ENCODE measurements at regions of chr7 and their contacts with region 1.

Region 1: DNA sequence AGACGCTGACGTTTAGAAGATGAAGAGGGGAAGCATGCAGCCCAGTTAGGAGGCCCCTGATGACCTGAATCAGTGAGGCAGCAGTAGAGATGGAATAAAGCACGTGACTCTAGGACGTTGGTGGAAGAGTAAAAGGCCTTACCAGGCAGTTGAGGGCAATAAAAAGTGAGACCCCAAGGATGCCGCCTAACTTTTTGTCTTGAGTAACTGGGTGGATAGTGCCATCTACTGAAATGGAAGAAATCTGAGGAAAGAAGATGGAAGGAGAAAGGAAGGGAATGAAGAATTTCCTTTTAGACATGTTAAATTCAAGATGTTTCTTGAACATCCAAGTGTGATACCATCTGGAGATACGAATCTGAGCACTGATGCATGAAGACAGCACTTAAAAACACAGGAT is 220.0 kb upstream of the LRRN3 start:
- DNase-seq: no peak
- ATAC-seq: no peak
- H3K4me3 ChIP-seq: no peak overlapping the region
- H3K4me3 Mint-ChIP-seq: no peak overlapping the region
- H3K27ac ChIP-seq: no peak overlapping the region
- H3K27ac Mint-ChIP-seq: no peak overlapping the region
- H3K4me1 ChIP-seq: no peaks in the 10 kb centered on the region
- H3K4me1 Mint-ChIP-seq: no peaks in the 10 kb centered on the region
- H3K27me3 ChIP-seq: no peaks in the 10 kb centered on the region
- H3K27me3 Mint-ChIP-seq: no peaks in the 10 kb centered on the region
- CTCF ChIP-seq: no peak

Region 2: GRCh38 chr7:110786328-110786965 is 84.5 kb before region 1 on chr7:
- CTCF ChIA-PET with region 1: no interaction called
- POLR2A ChIA-PET with region 1: no interaction called
- intact Hi-C with region 1: no loop called
- DNase-seq: no peak
- ATAC-seq: no peak
- H3K4me3 ChIP-seq: no peak overlapping the region
- H3K4me3 Mint-ChIP-seq: no peak overlapping the region
- H3K27ac ChIP-seq: no peak overlapping the region
- H3K27ac Mint-ChIP-seq: no peak overlapping the region
- H3K4me1 ChIP-seq: no peaks in the 10 kb centered on the region
- H3K4me1 Mint-ChIP-seq: no peaks in the 10 kb centered on the region
- H3K27me3 ChIP-seq: no peaks in the 10 kb centered on the region
- H3K27me3 Mint-ChIP-seq: no peaks in the 10 kb centered on the region
- CTCF ChIP-seq: no peak

Region 3: DNA sequence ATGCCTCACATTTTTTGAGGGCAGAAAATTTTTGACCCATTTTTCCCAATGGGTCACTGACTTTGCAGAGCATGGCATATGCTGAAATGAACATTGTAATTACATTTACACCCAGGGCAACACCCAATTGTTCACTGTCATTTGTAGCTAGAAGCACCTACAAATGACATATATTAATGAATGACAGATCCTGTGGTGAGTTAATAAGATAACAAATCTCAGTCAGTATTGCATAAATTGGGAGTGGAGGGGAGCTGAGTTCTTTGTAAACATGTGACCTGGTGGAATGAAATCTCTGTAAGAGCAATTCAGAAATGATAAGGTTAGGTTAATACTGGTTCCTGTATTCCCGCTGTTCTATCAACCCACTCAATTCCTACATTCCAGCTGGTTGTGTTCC is 35.1 kb before region 1 on chr7:
- CTCF ChIA-PET with region 1: no interaction called
- POLR2A ChIA-PET with region 1: no interaction called
- intact Hi-C with region 1: loop called in 1 of 2 experiments (anchors 2 kb)
- DNase-seq: no peak
- ATAC-seq: no peak
- H3K4me3 ChIP-seq: no peak overlapping the region
- H3K4me3 Mint-ChIP-seq: no peak overlapping the region
- H3K27ac ChIP-seq: no peak overlapping the region
- H3K27ac Mint-ChIP-seq: no peak overlapping the region
- H3K4me1 ChIP-seq: peaks cover 2% of the 10 kb centered on the region
- H3K4me1 Mint-ChIP-seq: peaks cover 22% of the 10 kb centered on the region
- H3K27me3 ChIP-seq: no peaks in the 10 kb centered on the region
- H3K27me3 Mint-ChIP-seq: no peaks in the 10 kb centered on the region
- CTCF ChIP-seq: no peak

Region 4: DNA sequence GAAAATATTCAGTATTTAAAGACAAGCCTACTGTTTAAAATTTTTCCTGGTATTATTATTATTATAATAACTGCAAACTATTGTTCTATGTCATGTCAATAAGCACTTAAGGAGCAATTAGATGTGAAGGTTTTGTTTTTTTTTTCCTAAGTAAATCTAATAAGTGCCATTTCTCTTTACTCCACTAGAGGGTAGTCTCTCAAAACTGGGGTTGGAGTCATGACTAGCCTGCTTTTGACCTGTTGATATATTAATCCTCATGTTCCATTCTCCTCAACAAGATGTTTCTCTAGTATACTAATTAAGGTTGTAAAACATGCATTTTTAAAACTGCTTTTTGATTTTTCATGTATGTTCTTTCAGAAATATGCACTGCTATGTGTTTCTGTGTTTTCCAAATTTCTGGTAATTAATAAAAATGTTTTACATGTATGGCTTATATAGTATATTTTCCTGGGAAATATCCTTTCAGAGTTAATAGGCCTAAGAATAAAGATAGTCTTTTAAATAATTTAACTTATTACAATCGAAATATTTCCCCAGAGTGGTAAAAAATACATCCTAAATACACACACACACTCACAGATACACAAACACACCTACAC is 219.0 kb after region 1 on chr7:
- CTCF ChIA-PET with region 1: no interaction called
- POLR2A ChIA-PET with region 1: no interaction called
- intact Hi-C with region 1: loop called in 1 of 2 experiments (anchors 5 kb)
- DNase-seq: peak in 3 of 14 experiments; percentile 44 to 72 (median 68)
- ATAC-seq: peak; percentile 58
- H3K4me3 ChIP-seq: no peak overlapping the region
- H3K4me3 Mint-ChIP-seq: peak overlapping the region; percentile 92
- H3K27ac ChIP-seq: no peak overlapping the region
- H3K27ac Mint-ChIP-seq: peak overlapping the region; percentile 82
- H3K4me1 ChIP-seq: no peaks in the 10 kb centered on the region
- H3K4me1 Mint-ChIP-seq: peaks cover 68% of the 10 kb centered on the region
- H3K27me3 ChIP-seq: no peaks in the 10 kb centered on the region
- H3K27me3 Mint-ChIP-seq: no peaks in the 10 kb centered on the region
- CTCF ChIP-seq: peak; percentile 77

Measured in CD4-positive, alpha-beta T cell (primary cell).